ENCODE measurements at regions of chr12 and their contacts with region 1.

Region 1: GRCh38 chr12:104456417-104456949 is at the start of gene CHST11:
- DNase-seq: peak; percentile 95
- H3K4me3 ChIP-seq: peak within 1 kb of the TSS; percentile 64 to 76 (median 68)
- H3K27ac ChIP-seq: peak within 1 kb of the TSS; percentile 36
- H3K4me1 ChIP-seq: peaks cover 40% of the 10 kb centered on the region
- H3K27me3 ChIP-seq: no peaks in the 10 kb centered on the region
- CTCF ChIP-seq: peak; percentile 11 to 41
- POLR2A ChIP-seq: no peak
- total RNA-seq, gene CHST11: 20.9 and 24.2 TPM in 2 replicates

Region 2: DNA sequence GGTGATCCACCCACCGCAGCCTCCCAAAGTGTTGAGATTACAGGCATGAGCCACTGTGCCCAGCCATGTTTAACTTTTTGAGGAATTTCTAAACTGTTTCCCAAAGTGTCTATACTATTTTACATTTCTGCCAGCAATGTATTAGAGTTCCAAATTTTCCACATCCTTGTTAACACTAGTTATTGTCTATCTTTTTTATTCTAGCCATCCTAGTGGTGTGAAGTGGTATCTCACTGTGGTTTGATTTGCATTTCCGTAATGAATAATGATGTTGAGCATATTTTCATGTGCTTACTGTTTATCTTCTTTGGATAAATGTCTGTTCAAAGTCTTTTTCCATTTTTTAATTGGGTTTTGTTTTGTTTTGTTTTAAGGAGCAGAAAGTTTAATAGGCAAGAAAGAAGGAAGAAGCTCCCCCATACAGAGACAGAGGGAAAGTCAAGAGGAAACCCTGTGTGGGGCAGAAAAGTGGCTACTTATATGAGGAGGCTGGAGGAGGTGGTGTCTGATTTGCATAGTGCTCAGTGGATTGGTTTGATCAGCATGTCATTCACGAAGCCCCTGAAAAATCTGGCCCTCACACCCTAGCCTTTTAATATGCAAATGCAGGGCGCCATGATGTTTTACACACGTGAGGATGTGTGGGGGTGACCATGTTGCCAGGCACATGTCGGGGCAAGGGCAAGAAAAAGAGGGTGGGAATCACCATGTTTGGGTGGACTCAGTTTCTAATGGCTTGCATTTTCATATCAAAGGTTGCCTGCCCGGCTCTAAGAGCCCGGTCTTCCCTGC is 226.0 kb before region 1 on chr12:
- CTCF ChIA-PET with region 1: no interaction called
- POLR2A ChIA-PET with region 1: no interaction called
- dilution Hi-C with region 1: no loop called
- intact Hi-C with region 1: no loop called
- DNase-seq: no peak
- H3K4me3 ChIP-seq: no peak overlapping the region
- H3K27ac ChIP-seq: no peak overlapping the region
- H3K4me1 ChIP-seq: no peaks in the 10 kb centered on the region
- H3K27me3 ChIP-seq: no peaks in the 10 kb centered on the region
- CTCF ChIP-seq: no peak
- POLR2A ChIP-seq: no peak

Region 3: GRCh38 chr12:104286538-104287482 is 169.7 kb before region 1 on chr12:
- CTCF ChIA-PET with region 1: no interaction called
- POLR2A ChIA-PET with region 1: no interaction called
- dilution Hi-C with region 1: no loop called
- intact Hi-C with region 1: loop called (anchors 10 kb)
- DNase-seq: peak; percentile 99
- H3K4me3 ChIP-seq: peak overlapping the region; percentile 67 to 98 (median 76)
- H3K27ac ChIP-seq: peak overlapping the region; percentile 78
- H3K4me1 ChIP-seq: peaks cover 34% of the 10 kb centered on the region
- H3K27me3 ChIP-seq: no peaks in the 10 kb centered on the region
- CTCF ChIP-seq: no peak
- POLR2A ChIP-seq: peak; percentile 96

Region 4: GRCh38 chr12:104546575-104546974 is 90.1 kb after region 1 on chr12:
- CTCF ChIA-PET with region 1: no interaction called
- POLR2A ChIA-PET with region 1: no interaction called
- dilution Hi-C with region 1: no loop called
- intact Hi-C with region 1: no loop called
- DNase-seq: peak; percentile 13
- H3K4me3 ChIP-seq: no peak overlapping the region
- H3K27ac ChIP-seq: no peak overlapping the region
- H3K4me1 ChIP-seq: peaks cover 3% of the 10 kb centered on the region
- H3K27me3 ChIP-seq: no peaks in the 10 kb centered on the region
- CTCF ChIP-seq: no peak
- POLR2A ChIP-seq: no peak

Region 5: GRCh38 chr12:104604070-104604994 is 147.8 kb after region 1 on chr12:
- CTCF ChIA-PET with region 1: interaction called, 14 read pairs
- POLR2A ChIA-PET with region 1: no interaction called
- dilution Hi-C with region 1: no loop called
- intact Hi-C with region 1: loop called (anchors 1 kb)
- DNase-seq: peak; percentile 98
- H3K4me3 ChIP-seq: peak overlapping the region in 1 of 3 experiments; percentile 38
- H3K27ac ChIP-seq: peak overlapping the region; percentile 89
- H3K4me1 ChIP-seq: peaks cover 35% of the 10 kb centered on the region
- H3K27me3 ChIP-seq: no peaks in the 10 kb centered on the region
- CTCF ChIP-seq: no peak
- POLR2A ChIP-seq: peak; percentile 30

Region 6: GRCh38 chr12:104733717-104734175 is 277.3 kb after region 1 on chr12:
- CTCF ChIA-PET with region 1: no interaction called
- POLR2A ChIA-PET with region 1: no interaction called
- dilution Hi-C with region 1: no loop called
- intact Hi-C with region 1: no loop called
- DNase-seq: no peak
- H3K4me3 ChIP-seq: no peak overlapping the region
- H3K27ac ChIP-seq: no peak overlapping the region
- H3K4me1 ChIP-seq: peaks cover 4% of the 10 kb centered on the region
- H3K27me3 ChIP-seq: no peaks in the 10 kb centered on the region
- CTCF ChIP-seq: peak; percentile 9 to 12
- POLR2A ChIP-seq: no peak

Region 7: DNA sequence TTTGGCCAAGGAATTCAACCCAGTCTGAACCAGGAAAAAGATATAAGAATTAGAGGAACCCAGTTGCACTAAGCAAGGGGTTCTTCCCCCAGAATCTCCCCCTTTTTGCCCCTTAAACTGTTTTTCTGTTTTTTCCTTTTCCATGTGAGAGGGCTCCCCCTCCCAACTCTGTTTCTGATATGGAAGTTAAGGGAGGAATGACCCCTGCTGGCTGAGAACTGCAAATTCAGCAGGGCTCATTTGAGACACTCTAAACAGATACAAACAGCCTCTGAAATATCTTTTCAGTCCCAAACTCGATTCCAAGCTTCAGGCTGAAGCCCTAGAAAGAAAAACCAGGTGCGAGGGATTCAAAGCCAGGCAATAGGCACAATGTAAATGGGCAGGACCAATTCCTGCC is 368.9 kb after region 1 on chr12:
- CTCF ChIA-PET with region 1: no interaction called
- POLR2A ChIA-PET with region 1: no interaction called
- dilution Hi-C with region 1: no loop called
- intact Hi-C with region 1: loop called (anchors 1 kb)
- DNase-seq: no peak
- H3K4me3 ChIP-seq: no peak overlapping the region
- H3K27ac ChIP-seq: no peak overlapping the region
- H3K4me1 ChIP-seq: no peaks in the 10 kb centered on the region
- H3K27me3 ChIP-seq: no peaks in the 10 kb centered on the region
- CTCF ChIP-seq: peak; percentile 16 to 35
- POLR2A ChIP-seq: no peak

Region 8: DNA sequence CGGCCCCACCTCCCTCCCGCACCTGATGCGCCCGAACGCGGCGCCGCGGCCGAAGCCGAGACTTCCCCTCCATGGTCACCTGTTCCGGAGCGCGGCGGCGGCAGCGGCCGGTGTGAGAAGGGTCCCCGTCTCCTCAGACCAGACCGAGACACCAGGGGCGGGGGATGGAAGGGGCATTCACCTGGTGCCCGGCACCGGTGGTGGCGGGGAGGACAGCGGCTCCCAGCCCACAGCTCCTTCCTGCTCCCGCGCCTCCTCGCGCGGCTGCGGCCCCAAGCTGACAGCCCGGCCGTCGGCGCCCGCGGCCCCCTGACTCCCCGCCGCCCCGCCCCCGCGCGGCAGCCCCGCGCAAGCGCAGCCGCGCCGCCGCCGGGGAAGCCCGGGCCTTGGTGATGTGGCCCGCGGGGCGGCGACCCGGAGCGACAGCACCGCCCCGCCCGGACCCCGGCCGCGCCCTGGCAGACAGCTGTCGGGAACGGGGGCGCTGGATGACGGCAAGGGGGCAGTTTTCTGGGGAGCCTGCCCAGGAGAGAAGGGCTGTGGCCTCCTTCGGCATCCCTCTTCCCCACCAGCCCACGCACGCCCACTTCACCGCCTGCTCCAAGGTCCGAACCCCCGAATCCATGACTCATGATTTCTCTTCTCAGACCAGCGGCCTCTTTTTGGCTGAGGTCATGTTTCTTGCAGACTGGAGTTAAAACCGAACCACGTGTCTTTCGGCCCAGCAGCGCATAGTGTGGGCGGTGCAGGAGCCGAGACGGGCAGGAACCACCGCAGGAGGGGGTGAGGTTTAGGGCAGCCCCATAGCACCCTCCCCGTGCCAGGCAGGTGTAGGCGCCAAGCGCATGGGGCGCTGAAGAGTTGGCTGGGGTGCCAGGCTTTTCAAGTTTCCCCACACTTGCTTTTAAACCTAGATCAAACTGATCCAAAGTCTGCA is 501.8 kb after region 1 on chr12 and contains the start of gene SLC41A2:
- CTCF ChIA-PET with region 1: no interaction called
- POLR2A ChIA-PET with region 1: no interaction called
- dilution Hi-C with region 1: no loop called
- intact Hi-C with region 1: loop called (anchors 2 kb)
- DNase-seq: peak; percentile 81
- H3K4me3 ChIP-seq: peak within 1 kb of the TSS; percentile 72 to 89 (median 78)
- H3K27ac ChIP-seq: peak within 1 kb of the TSS; percentile 72
- H3K4me1 ChIP-seq: peaks cover 21% of the 10 kb centered on the region
- H3K27me3 ChIP-seq: peaks cover 0 to 5% of the 10 kb centered on the region in 2 experiments
- CTCF ChIP-seq: no peak
- POLR2A ChIP-seq: peak; percentile 51
- total RNA-seq, gene SLC41A2: 7.5 and 8.0 TPM in 2 replicates